Mammary epithelial cell (primary cell): ENCODE measurements at regions of chr6 and their contacts with region 1.

Region 1: DNA sequence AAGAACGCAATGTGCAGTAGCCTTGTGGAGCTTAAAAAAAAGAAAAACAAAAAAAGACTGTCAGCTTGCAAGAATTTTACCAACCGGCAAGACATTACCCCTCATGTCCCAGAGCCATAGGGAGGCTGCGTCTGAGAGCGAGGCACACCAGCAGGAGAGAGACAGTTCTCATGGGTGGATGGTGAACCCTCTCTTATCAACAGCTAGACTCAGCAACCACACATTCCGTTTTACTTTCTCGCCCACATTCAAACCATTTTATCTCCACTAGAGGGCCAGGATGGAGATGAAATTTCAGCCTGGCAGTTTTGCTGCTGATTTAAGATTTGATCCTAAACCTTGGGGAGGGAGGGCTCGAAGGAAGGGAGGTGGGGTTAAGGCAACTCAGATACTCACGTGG is 247.0 kb downstream of the ATXN1 start:
- DNase-seq: peak; percentile 18
- H3K4me3 ChIP-seq: no peak overlapping the region
- H3K27ac ChIP-seq: no peak overlapping the region
- H3K4me1 ChIP-seq: peaks cover 7% of the 10 kb centered on the region
- H3K27me3 ChIP-seq: no peaks in the 10 kb centered on the region
- CTCF ChIP-seq: peak; percentile 44 to 58

Region 2: DNA sequence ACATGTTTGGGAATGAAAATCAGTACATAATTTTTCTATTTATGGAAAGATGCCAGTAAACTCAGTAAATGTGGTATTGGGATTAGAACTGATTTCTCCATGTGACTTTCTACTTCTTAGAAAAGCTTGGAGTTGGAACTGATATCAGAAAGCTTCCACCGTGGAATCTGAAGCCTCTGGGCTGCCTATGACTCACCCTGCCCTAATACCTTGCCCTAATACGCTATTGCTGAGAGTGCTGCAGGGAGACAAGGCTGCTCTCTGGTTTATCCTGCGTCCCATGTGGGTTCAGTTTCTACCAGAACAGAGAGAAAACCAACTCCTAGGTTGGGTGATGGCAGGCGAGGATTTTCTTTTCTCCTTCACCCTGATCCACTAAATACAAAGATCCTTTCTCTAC is 584.3 kb after region 1 on chr6:
- CTCF ChIA-PET with region 1: no interaction called
- dilution Hi-C with region 1: loop called (anchors 5 kb)
- in situ Hi-C with region 1: loop called in 1 of 2 experiments (anchors 25 kb)
- intact Hi-C with region 1: no loop called
- DNase-seq: no peak
- H3K4me3 ChIP-seq: no peak overlapping the region
- H3K27ac ChIP-seq: no peak overlapping the region
- H3K4me1 ChIP-seq: peaks cover 11% of the 10 kb centered on the region
- H3K27me3 ChIP-seq: peaks cover 8% of the 10 kb centered on the region
- CTCF ChIP-seq: no peak